ENCODE measurements at regions of chr11 and their contacts with region 1.

Region 1: GRCh38 chr11:30855383-30856006 is 269.3 kb upstream of the MPPED2 start:
- DNase-seq: no peak
- H3K4me3 ChIP-seq: no peak overlapping the region
- H3K27ac ChIP-seq: no peak overlapping the region
- H3K4me1 ChIP-seq: no peaks in the 10 kb centered on the region
- H3K27me3 ChIP-seq: no peaks in the 10 kb centered on the region
- CTCF ChIP-seq: peak in 3 of 4 experiments; percentile 12 to 52 (median 17)
- EP300 ChIP-seq: no peak
- POLR2A ChIP-seq: no peak

Region 2: GRCh38 chr11:30445056-30445455 is 410.4 kb before region 1 on chr11:
- intact Hi-C with region 1: loop called (anchors 5 kb)
- DNase-seq: no peak
- H3K4me3 ChIP-seq: no peak overlapping the region
- H3K27ac ChIP-seq: no peak overlapping the region
- H3K4me1 ChIP-seq: peaks cover 0 to 11% (median 0%) of the 10 kb centered on the region in 4 donors
- H3K27me3 ChIP-seq: no peaks in the 10 kb centered on the region
- CTCF ChIP-seq: no peak
- EP300 ChIP-seq: no peak
- POLR2A ChIP-seq: no peak

Region 3: DNA sequence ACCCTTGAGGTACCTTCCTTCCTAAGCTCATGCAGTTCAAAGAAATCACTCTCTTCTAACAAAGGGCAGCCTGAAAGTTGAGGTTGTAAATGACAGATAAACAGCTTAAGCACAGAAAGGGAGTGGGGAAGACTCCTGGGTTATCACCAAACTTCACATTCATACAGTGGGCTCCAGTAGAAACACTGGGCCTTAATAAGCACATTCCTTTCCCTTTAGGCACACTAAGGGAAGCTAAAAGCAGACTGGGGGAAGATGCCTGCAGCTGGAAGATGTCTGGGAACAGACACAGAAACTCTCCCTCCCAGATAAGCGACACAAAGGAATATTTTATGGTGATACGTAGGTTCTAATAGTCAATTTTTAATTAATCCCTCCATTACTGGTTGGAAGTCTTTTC is 81.0 kb after region 1 on chr11:
- intact Hi-C with region 1: no loop called
- DNase-seq: no peak
- H3K4me3 ChIP-seq: no peak overlapping the region
- H3K27ac ChIP-seq: no peak overlapping the region
- H3K4me1 ChIP-seq: no peaks in the 10 kb centered on the region
- H3K27me3 ChIP-seq: no peaks in the 10 kb centered on the region
- CTCF ChIP-seq: no peak
- EP300 ChIP-seq: no peak
- POLR2A ChIP-seq: no peak

Measured in sigmoid colon (tissue), 7 donors.